ENCODE measurements at regions of chr11 and their contacts with region 1.

Region 1: DNA sequence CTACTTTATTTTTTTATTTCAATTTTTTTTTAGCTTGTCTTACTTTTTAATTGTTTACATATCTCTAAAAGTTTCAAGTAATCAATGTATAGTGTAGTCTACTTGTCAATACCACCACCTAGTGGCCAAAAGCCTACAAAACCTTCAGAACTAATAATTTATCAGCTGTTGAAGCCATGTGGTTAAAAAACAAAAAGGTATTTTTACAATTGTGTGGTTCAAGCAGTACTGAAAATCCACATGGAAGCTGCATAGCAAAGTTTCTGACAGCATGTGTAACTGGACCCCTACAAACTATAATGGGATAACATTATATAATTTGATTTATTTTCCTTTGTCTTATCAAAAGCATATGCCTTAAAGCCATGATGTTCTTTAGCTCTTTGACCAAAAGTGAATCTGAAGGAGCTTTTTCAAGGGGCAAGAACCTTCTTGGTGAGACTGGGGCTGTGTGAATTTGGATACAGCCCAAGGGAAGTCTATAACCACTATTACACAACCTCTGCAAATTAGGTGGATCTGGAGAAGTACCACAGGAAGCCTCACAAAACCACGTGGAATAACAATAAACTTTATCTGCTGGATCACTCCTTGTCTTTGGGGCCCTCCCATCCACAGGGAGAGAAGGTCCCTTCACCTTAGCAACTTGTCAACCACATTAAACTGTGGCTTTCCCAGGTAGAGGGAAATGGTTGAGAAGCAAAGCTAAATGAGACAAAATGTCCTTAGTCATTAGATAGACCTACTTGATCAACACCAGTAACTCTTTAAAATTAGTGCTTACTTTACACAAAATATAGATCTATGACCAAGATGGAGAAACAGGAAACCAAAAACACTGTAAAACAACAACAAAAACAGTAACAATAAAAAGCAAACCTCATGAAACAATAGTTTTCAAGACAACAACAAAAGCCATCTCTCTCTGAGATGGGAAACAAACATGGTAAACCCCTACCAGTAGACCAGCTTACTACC is 9.9 kb downstream of the NARS2 start:
- DNase-seq: peak; percentile 76
- ATAC-seq: peak; percentile 58
- H3K4me3 ChIP-seq: no peak overlapping the region
- H3K27ac ChIP-seq: peak overlapping the region; percentile 3; the same call in 1 of the 2 replicates
- H3K4me1 ChIP-seq: peaks cover 13% of the 10 kb centered on the region
- H3K27me3 ChIP-seq: no peaks in the 10 kb centered on the region
- CTCF ChIP-seq: peak; percentile 80
- POLR2A ChIP-seq: no peak
- RAD21 ChIP-seq: peak; percentile 80

Region 2: GRCh38 chr11:78000193-78000592 is 564.6 kb before region 1 on chr11:
- CTCF ChIA-PET with region 1: no interaction called
- POLR2A ChIA-PET with region 1: no interaction called
- dilution Hi-C with region 1: no loop called
- in situ Hi-C with region 1: no loop called
- intact Hi-C with region 1: loop called (anchors 10 kb)
- DNase-seq: peak; percentile 77
- ATAC-seq: peak; percentile 94
- H3K4me3 ChIP-seq: no peak overlapping the region
- H3K27ac ChIP-seq: no peak overlapping the region
- H3K4me1 ChIP-seq: peaks cover 2% of the 10 kb centered on the region; the same call in 1 of the 2 replicates
- H3K27me3 ChIP-seq: peaks cover 5% of the 10 kb centered on the region
- CTCF ChIP-seq: peak; percentile 74
- POLR2A ChIP-seq: no peak
- RAD21 ChIP-seq: peak; percentile 71

Region 3: DNA sequence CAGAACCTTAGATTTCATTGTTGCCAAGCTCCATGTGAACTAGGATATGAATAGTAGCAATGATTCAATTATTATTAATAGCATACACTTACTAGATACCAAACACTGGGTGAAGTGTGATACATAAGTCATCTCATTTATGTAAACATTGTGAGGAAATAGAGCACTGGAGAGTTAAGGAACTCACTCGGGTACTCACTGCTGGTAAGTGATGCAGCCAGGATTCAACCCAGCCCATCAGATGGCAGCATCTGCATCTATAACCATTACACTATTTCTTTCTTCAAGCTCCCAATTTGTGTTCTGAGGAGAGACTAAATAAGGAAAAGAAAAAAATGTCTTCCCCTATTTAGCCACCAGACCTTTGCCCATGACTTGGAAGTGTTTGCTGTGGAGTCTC is 415.1 kb before region 1 on chr11:
- CTCF ChIA-PET with region 1: interaction called, 11 read pairs
- POLR2A ChIA-PET with region 1: no interaction called
- dilution Hi-C with region 1: no loop called
- in situ Hi-C with region 1: loop called (anchors 5 kb)
- intact Hi-C with region 1: loop called (anchors 1 kb)
- DNase-seq: peak; percentile 87
- ATAC-seq: peak; percentile 98
- H3K4me3 ChIP-seq: no peak overlapping the region
- H3K27ac ChIP-seq: no peak overlapping the region
- H3K4me1 ChIP-seq: no peaks in the 10 kb centered on the region
- H3K27me3 ChIP-seq: no peaks in the 10 kb centered on the region
- CTCF ChIP-seq: peak; percentile 64
- POLR2A ChIP-seq: no peak
- RAD21 ChIP-seq: peak; percentile 71

Region 4: DNA sequence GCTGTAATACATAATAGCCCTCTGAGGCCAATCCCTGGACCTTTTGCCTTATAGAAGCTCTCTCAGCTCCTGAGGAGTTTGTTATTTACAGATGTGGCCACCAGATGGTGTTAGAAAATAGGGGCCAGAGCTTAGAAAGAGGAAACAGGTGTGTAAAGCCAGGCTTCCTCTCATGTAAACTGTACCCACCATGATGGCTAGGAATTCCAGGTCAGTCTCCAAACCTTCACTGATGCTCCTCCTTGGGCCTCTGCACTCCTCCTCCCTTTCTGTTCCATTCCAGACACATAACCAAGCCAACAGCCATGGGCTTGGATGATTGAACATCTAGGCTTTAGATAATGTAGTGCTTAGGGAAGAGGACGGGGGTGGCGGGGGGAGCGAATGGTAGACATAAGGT is 336.3 kb before region 1 on chr11:
- CTCF ChIA-PET with region 1: interaction called, 22 read pairs
- POLR2A ChIA-PET with region 1: no interaction called
- dilution Hi-C with region 1: no loop called
- in situ Hi-C with region 1: loop called (anchors 10 kb)
- intact Hi-C with region 1: loop called (anchors 2 kb)
- DNase-seq: peak; percentile 55
- ATAC-seq: peak; percentile 39; the same call in 1 of the 2 replicates
- H3K4me3 ChIP-seq: no peak overlapping the region
- H3K27ac ChIP-seq: no peak overlapping the region
- H3K4me1 ChIP-seq: peaks cover 14% of the 10 kb centered on the region
- H3K27me3 ChIP-seq: no peaks in the 10 kb centered on the region
- CTCF ChIP-seq: peak; percentile 51
- POLR2A ChIP-seq: no peak
- RAD21 ChIP-seq: peak; percentile 69